ENCODE measurements at regions of chr7 and their contacts with region 1.

Region 1: GRCh38 chr7:23196306-23196705 is 14.5 kb downstream of the NUP42 start:
- DNase-seq: no peak
- ATAC-seq: peak; percentile 79

Region 2: GRCh38 chr7:23161482-23161881 is 34.8 kb before region 1 on chr7:
- intact Hi-C with region 1: no loop called
- DNase-seq: no peak
- ATAC-seq: no peak

Region 3: DNA sequence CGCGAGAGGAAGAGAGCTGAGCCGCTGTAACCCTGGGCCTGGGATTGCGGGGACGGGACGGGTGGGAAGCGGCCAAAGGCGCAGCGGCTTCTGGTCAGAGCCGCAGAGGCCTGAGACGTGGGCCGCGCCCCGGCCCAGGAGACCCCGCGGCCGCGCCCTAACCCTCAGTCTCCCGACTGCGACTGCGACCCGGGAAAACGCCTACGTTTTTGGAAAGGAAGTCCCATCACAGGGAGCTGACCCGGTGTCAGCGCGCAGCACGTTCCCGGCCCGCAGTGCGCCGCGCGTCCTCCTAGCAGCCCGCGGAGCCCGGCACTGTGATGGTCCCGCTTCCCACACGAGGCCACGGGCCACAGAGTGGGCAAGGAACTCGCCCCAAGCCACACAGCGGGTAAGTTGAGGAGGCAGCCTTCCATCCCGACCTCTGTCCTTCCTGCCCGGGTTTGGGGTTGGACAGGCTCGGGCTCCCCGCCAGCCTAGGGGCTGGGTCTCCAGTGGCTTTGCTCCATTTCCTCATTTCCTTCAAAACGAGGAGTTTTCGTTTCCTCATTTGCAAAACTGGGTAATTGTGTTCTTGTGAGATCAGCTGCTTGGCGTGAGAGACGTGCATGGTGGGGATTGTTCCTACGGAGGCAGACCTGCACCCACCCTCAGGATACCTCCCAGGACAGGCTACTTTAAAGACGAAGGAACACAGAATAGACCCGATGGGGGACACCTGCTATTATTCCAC is 51.5 kb after region 1 on chr7:
- intact Hi-C with region 1: loop called (anchors 5 kb)
- DNase-seq: peak; percentile 84
- ATAC-seq: peak; percentile 77